Activated T-helper 1 cell treated with anti-CD3 and anti-CD28 coated beads, Interleukin-12 subunit alpha, Interleukin-12 subunit beta, Interleukin-2, Interleukin-4 antibody, amounts not matched to agents 30 ng/mL and 10 ng/mL and 1 ng/mL, durations not matched to agents 14 hours and 24 hours and 36 hours (primary cell): ENCODE measurements at regions of chr12 and their contacts with region 1.

Region 1: GRCh38 chr12:24901576-24902461 is 47.1 kb downstream of the BCAT1 start:
- DNase-seq: peak; percentile 11
- H3K4me3 Mint-ChIP-seq: peak overlapping the region; percentile 99
- H3K27ac Mint-ChIP-seq: peak overlapping the region; percentile 99
- H3K4me1 Mint-ChIP-seq: peaks cover 45% of the 10 kb centered on the region
- H3K27me3 Mint-ChIP-seq: peaks cover 5% of the 10 kb centered on the region

Region 2: GRCh38 chr12:24709216-24709615 is 192.6 kb before region 1 on chr12:
- intact Hi-C with region 1: loop called (anchors 2 kb)
- DNase-seq: no peak
- H3K4me3 Mint-ChIP-seq: no peak overlapping the region
- H3K27ac Mint-ChIP-seq: no peak overlapping the region
- H3K4me1 Mint-ChIP-seq: peaks cover 20% of the 10 kb centered on the region
- H3K27me3 Mint-ChIP-seq: no peaks in the 10 kb centered on the region

Region 3: GRCh38 chr12:24852420-24852819 is 49.4 kb before region 1 on chr12:
- intact Hi-C with region 1: loop called (anchors 2 kb)
- DNase-seq: no peak
- H3K4me3 Mint-ChIP-seq: no peak overlapping the region
- H3K27ac Mint-ChIP-seq: no peak overlapping the region
- H3K4me1 Mint-ChIP-seq: peaks cover 14% of the 10 kb centered on the region
- H3K27me3 Mint-ChIP-seq: peaks cover 2% of the 10 kb centered on the region

Region 4: GRCh38 chr12:24921251-24922038 is 19.6 kb after region 1 on chr12:
- intact Hi-C with region 1: loop called (anchors 1 kb)
- DNase-seq: no peak
- H3K4me3 Mint-ChIP-seq: no peak overlapping the region
- H3K27ac Mint-ChIP-seq: peak overlapping the region; percentile 42
- H3K4me1 Mint-ChIP-seq: peaks cover 44% of the 10 kb centered on the region
- H3K27me3 Mint-ChIP-seq: peaks cover 2% of the 10 kb centered on the region

Region 5: GRCh38 chr12:24948757-24949722 is 47.2 kb after region 1 on chr12 and contains the start of gene BCAT1:
- intact Hi-C with region 1: loop called (anchors 1 kb)
- DNase-seq: peak; percentile 33
- H3K4me3 Mint-ChIP-seq: peak within 1 kb of the TSS; percentile 92
- H3K27ac Mint-ChIP-seq: peak within 1 kb of the TSS; percentile 96
- H3K4me1 Mint-ChIP-seq: peaks cover 55% of the 10 kb centered on the region
- H3K27me3 Mint-ChIP-seq: peaks cover 3% of the 10 kb centered on the region
- total RNA-seq, gene BCAT1: 37.3 and 42.0 TPM in 2 replicates

Region 6: DNA sequence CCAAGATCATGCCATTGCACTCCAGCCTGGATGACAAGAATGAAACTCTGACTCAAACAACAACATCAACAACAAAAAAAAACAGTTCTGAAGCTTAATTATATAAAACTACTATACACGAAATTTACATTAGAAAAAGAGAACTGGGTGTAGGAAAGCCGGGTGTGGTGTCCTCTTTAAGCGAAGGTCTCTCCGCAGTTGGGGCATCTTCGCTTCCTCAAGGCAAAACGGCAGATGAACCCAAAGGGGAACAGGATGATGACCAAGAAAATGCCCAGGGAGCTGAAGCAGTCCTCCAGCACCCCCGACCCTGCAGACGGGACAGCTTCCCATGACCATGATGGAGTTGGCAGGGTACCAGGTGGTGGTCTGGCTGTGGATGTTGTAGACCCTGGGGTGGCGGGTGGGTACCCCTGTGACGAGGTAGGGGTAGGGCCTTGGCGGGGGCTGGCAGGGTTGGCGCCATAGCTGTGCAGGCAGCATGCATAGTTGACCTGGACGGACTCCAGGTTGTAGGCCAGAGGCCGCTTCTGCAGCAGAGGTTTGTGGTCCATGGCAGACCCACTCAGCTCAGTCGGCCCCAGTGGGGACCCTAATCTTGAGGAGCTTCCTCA is 65.2 kb after region 1 on chr12:
- intact Hi-C with region 1: no loop called
- DNase-seq: no peak
- H3K4me3 Mint-ChIP-seq: no peak overlapping the region
- H3K27ac Mint-ChIP-seq: no peak overlapping the region
- H3K4me1 Mint-ChIP-seq: no peaks in the 10 kb centered on the region
- H3K27me3 Mint-ChIP-seq: peaks cover 4% of the 10 kb centered on the region

Region 7: DNA sequence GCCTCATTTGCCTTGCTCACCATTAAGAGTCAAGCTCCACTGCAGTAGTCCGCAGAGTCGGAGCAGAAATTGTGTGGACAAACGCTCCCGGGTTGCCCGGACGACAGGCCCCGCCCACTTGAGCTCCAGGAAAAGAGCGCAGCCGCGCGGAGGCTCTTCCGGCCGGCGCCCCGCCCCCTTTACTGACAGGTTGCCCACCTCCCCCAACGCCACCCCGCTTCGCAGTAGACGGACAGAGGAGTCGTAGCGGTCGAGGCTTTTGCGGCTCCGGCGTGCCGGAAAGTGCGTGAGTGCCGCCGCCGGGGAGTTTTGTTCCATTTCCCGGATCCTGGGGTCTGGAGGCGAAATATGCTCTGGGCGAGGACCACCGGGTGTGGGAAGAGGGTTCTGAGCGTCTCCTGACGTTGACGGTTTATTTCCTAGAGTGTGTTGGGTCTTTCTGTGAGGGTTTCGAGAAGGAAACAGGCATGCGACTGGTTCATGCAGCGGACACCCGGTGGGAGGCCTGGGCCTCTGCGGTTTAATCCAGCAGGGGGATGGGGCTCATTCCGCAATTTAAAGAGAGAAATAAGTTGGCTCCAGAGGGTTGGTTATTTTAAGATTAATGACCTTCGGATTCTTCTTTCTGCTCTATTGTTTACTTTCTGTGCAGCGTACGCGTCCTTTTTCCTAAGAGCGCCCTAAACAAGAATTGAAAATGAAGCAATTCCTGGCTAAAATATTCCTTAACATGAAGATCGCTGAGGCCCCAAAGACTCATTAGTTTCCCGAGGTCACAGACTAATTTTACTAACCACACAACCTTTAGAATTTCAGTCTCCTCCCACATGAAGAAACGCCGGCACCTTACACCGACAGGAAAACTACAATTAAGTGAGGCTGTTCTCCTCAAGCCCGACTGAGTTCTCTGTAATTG is 293.5 kb after region 1 on chr12 and contains the starts of genes DNAI7 and ETFRF1:
- intact Hi-C with region 1: loop called (anchors 2 kb)
- DNase-seq: peak; percentile 92
- H3K4me3 Mint-ChIP-seq: peak within 1 kb of the TSS; percentile 98
- H3K27ac Mint-ChIP-seq: peak within 1 kb of the TSS; percentile 95
- H3K4me1 Mint-ChIP-seq: peaks cover 23% of the 10 kb centered on the region
- H3K27me3 Mint-ChIP-seq: peaks cover 2% of the 10 kb centered on the region
- total RNA-seq, gene DNAI7: 0.23 TPM in 1 of 2 replicates, not detected in the other
- total RNA-seq, gene ETFRF1: 9.7 and 10.4 TPM in 2 replicates